PC-3 (cell line): ENCODE measurements at regions of chr7 and their contacts with region 1.

Region 1: DNA sequence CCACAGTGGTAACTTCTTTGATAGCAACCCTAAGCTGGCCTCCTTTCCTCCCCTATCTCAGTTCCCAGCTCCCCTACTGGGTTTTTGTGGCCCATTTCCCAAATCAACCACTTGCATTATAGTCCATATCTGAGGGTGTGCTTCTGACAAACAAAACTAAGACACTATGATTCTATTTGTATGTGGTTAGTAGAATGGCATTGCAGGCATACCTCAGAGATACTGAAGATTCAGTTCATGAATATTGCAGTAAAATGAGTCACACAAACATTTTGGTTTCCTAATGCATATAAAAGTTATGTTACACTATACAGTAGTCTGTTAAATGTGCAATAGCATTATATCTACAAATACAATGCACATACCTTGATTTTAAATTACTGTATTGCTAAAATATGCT is 15.4 kb upstream of the TMEM243 start:
- DNase-seq: peak; percentile 67
- ATAC-seq: peak; percentile 93
- H3K4me3 ChIP-seq: no peak overlapping the region
- H3K27ac ChIP-seq: no peak overlapping the region
- H3K4me1 ChIP-seq: peaks cover 12% of the 10 kb centered on the region
- H3K27me3 ChIP-seq: no peaks in the 10 kb centered on the region
- CTCF ChIP-seq: no peak

Region 2: DNA sequence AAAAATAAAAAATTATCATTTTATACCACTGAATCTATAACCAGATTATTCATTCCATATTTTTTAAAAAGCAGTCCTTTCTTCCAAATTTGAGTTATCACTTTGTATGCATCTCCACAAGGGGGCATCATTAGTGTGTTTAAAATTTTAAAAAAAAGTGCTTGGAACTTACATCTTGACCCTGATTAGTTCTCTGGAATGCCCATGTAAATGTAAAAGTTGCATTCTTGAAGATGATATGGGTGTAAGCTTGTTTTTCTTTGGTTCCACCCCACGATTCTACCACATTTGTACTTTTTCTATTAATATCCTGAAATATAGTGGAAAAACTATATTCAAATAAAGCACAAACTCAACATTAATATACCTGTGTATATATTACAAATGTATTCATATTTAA is 320.4 kb before region 1 on chr7:
- CTCF ChIA-PET with region 1: no interaction called
- POLR2A ChIA-PET with region 1: no interaction called
- intact Hi-C with region 1: loop called (anchors 1 kb)
- DNase-seq: peak; percentile 53
- ATAC-seq: peak; percentile 33; the same call in 1 of the 2 replicates
- H3K4me3 ChIP-seq: no peak overlapping the region
- H3K27ac ChIP-seq: no peak overlapping the region
- H3K4me1 ChIP-seq: no peaks in the 10 kb centered on the region
- H3K27me3 ChIP-seq: no peaks in the 10 kb centered on the region
- CTCF ChIP-seq: peak; percentile 72

Region 3: GRCh38 chr7:86926732-86927131 is 308.2 kb before region 1 on chr7:
- CTCF ChIA-PET with region 1: no interaction called
- POLR2A ChIA-PET with region 1: no interaction called
- intact Hi-C with region 1: loop called (anchors 1 kb)
- DNase-seq: peak; percentile 70
- ATAC-seq: peak; percentile 72
- H3K4me3 ChIP-seq: no peak overlapping the region
- H3K27ac ChIP-seq: no peak overlapping the region
- H3K4me1 ChIP-seq: peaks cover 4% of the 10 kb centered on the region
- H3K27me3 ChIP-seq: no peaks in the 10 kb centered on the region
- CTCF ChIP-seq: peak; percentile 78

Region 4: DNA sequence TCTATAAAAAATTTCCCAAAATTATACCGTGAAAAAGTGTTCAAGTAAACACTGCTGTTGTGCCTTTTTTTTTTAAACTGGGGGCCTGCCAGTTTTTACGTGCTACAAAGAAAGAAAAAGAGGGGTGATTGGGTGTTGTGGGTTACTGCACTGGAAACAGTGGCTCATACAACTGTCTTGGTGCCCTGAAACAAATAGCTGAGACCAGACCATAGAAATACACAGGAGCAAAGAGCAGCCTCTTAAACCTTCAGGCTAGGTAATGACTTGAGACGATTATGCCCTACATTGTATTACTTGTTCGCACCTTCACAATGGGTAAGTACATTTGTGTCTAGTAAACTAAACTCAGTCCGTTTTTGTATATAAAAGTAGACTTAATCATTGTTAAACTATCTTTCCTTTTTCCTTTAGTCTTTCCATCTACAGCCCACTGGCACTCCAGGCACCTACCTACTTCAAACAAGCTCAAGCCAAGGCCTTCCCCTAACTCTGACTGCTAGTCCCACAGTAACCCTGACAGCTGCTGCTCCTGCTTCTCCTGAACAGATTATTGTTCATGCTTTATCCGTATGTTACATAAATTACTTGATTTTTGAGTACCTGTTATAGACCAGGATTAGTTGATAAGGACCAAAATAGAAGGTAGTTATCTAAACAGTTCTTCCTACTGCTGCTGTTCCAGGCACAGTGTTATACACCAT is 42.0 kb before region 1 on chr7:
- CTCF ChIA-PET with region 1: no interaction called
- POLR2A ChIA-PET with region 1: no interaction called
- intact Hi-C with region 1: loop called (anchors 5 kb)
- DNase-seq: no peak
- ATAC-seq: no peak
- H3K4me3 ChIP-seq: no peak overlapping the region
- H3K27ac ChIP-seq: no peak overlapping the region
- H3K4me1 ChIP-seq: no peaks in the 10 kb centered on the region
- H3K27me3 ChIP-seq: no peaks in the 10 kb centered on the region
- CTCF ChIP-seq: no peak

Region 5: DNA sequence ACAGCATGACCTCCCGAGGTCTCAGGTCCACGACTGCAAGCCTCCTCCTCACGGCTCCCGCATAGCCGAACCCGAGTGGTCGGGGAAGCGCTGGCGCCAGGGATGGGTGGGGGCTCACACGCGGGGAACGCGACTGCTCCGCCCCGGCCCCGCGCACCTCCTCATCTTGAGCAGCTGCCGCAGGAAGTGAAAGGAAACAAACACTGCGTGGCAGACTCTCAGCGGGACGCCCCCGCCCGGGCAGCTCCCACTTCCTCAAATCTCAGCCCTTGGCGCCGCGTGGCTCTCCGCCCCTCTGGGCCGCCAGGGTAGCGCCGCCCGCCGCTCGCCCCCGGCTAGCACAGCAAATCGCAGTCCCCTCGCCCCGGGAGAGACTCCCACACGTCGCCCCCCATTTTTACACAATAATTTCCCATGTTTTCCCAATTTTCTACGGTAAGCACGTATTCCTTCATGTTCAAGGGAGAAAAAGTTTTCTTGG is 15.4 kb before region 1 on chr7 and contains the start of gene TMEM243:
- CTCF ChIA-PET with region 1: no interaction called
- POLR2A ChIA-PET with region 1: no interaction called
- intact Hi-C with region 1: loop called (anchors 1 kb)
- DNase-seq: peak; percentile 54
- ATAC-seq: peak; percentile 60
- H3K4me3 ChIP-seq: peak within 1 kb of the TSS; percentile 94
- H3K27ac ChIP-seq: peak within 1 kb of the TSS; percentile 14; the same call in 1 of the 2 replicates
- H3K4me1 ChIP-seq: peaks cover 8% of the 10 kb centered on the region; the same call in 1 of the 2 replicates
- H3K27me3 ChIP-seq: no peaks in the 10 kb centered on the region
- CTCF ChIP-seq: peak; percentile 9; the same call in 1 of the 2 replicates
- total RNA-seq, gene TMEM243: 16.6 and 18.8 TPM in 2 replicates

Region 6: GRCh38 chr7:87300756-87301155 is 65.8 kb after region 1 on chr7:
- CTCF ChIA-PET with region 1: no interaction called
- POLR2A ChIA-PET with region 1: no interaction called
- intact Hi-C with region 1: no loop called
- DNase-seq: no peak
- ATAC-seq: no peak
- H3K4me3 ChIP-seq: no peak overlapping the region
- H3K27ac ChIP-seq: no peak overlapping the region
- H3K4me1 ChIP-seq: no peaks in the 10 kb centered on the region
- H3K27me3 ChIP-seq: no peaks in the 10 kb centered on the region
- CTCF ChIP-seq: no peak

Region 7: DNA sequence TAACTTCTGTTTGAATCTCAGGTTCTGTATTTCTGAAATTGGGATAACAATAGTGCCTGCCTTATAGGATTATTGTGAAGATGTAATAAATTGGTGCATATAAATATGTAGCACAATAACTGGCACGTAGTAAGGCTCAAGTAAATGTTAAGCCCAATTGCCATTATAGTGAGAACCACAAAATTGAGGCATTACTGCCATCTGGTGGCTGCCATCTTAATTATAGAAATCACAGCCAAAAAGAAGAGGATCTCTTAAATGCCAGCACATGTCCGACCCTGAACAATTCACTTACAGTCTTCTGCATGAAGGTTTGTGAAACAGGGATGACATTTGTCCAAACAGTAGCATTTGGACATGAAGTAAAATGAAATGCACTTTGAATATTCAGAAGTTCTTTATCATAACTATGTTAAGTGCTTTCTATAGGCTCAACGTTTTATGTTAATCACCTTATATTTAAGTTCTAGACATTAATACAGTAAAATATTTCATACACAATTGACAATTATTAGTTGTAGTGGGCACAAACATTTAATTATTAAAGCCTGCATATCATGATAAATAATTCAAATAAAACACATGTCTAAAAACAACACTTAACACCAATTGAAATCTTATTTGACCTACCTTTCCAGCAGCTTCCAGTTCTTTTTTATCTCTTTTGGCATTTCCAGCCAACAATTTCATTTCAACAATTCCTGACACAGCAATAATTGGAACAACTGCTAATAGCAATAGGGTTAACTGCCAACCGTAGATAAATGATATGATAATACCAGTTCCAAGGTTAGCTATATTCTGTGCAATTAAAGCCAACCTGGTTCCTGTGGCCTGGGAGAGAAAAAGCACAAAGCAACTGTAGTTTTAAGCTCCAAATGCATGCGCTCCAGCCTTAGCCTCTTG is 182.0 kb after region 1 on chr7:
- CTCF ChIA-PET with region 1: no interaction called
- POLR2A ChIA-PET with region 1: no interaction called
- intact Hi-C with region 1: no loop called
- DNase-seq: peak; percentile 85
- ATAC-seq: 0 out of 2 replicates have a peak, but pooled peaks have one; percentile 11
- H3K4me3 ChIP-seq: no peak overlapping the region
- H3K27ac ChIP-seq: no peak overlapping the region
- H3K4me1 ChIP-seq: peaks cover 25% of the 10 kb centered on the region
- H3K27me3 ChIP-seq: 0 out of 2 replicates have a peak, but pooled peaks cover 7% of the 10 kb centered on the region
- CTCF ChIP-seq: peak; percentile 87